CD4-positive, alpha-beta T cell (primary cell): ENCODE measurements at regions of chrX and their contacts with region 1.

Region 1: GRCh38 chrX:81377329-81377728 is 175.4 kb downstream of the SH3BGRL start:
- DNase-seq: peak in 3 of 14 experiments; percentile 5 to 25 (median 12)
- ATAC-seq: no peak
- H3K4me3 ChIP-seq: no peak overlapping the region
- H3K4me3 Mint-ChIP-seq: no peak overlapping the region
- H3K27ac ChIP-seq: no peak overlapping the region
- H3K27ac Mint-ChIP-seq: no peak overlapping the region
- H3K4me1 ChIP-seq: no peaks in the 10 kb centered on the region
- H3K4me1 Mint-ChIP-seq: no peaks in the 10 kb centered on the region
- H3K27me3 ChIP-seq: no peaks in the 10 kb centered on the region
- H3K27me3 Mint-ChIP-seq: peaks cover 16% of the 10 kb centered on the region
- CTCF ChIP-seq: peak; percentile 45

Region 2: DNA sequence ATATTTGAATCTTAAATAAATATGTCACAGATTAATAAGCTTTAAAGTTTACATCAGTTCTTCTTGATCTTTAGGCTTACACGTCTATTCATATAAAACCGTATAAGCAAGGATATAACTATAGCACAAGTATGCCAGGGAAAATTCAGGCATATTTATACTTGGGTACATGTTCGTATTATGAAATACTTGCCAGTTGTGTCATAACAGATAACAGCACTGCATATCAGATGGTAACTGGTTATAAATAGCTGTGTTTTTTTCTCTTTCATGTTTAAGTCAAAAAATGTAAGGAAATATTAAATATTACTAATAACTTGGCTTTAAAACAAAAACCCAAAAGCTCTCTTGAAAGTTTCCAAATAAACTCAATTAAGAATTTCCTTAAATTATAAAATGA is 585.1 kb before region 1 on chrX:
- CTCF ChIA-PET with region 1: no interaction called
- POLR2A ChIA-PET with region 1: no interaction called
- intact Hi-C with region 1: no loop called
- DNase-seq: no peak
- ATAC-seq: no peak
- H3K4me3 ChIP-seq: no peak overlapping the region
- H3K4me3 Mint-ChIP-seq: no peak overlapping the region
- H3K27ac ChIP-seq: no peak overlapping the region
- H3K27ac Mint-ChIP-seq: no peak overlapping the region
- H3K4me1 ChIP-seq: no peaks in the 10 kb centered on the region
- H3K4me1 Mint-ChIP-seq: no peaks in the 10 kb centered on the region
- H3K27me3 ChIP-seq: no peaks in the 10 kb centered on the region
- H3K27me3 Mint-ChIP-seq: no peaks in the 10 kb centered on the region
- CTCF ChIP-seq: no peak

Region 3: GRCh38 chrX:81174286-81174685 is 203.0 kb before region 1 on chrX:
- CTCF ChIA-PET with region 1: interaction called, 3 read pairs
- POLR2A ChIA-PET with region 1: no interaction called
- intact Hi-C with region 1: loop called (anchors 2 to 5 kb)
- DNase-seq: peak in 3 of 14 experiments; percentile 15 to 19 (median 16)
- ATAC-seq: no peak
- H3K4me3 ChIP-seq: no peak overlapping the region
- H3K4me3 Mint-ChIP-seq: no peak overlapping the region
- H3K27ac ChIP-seq: no peak overlapping the region
- H3K27ac Mint-ChIP-seq: no peak overlapping the region
- H3K4me1 ChIP-seq: no peaks in the 10 kb centered on the region
- H3K4me1 Mint-ChIP-seq: no peaks in the 10 kb centered on the region
- H3K27me3 ChIP-seq: no peaks in the 10 kb centered on the region
- H3K27me3 Mint-ChIP-seq: no peaks in the 10 kb centered on the region
- CTCF ChIP-seq: no peak

Region 4: DNA sequence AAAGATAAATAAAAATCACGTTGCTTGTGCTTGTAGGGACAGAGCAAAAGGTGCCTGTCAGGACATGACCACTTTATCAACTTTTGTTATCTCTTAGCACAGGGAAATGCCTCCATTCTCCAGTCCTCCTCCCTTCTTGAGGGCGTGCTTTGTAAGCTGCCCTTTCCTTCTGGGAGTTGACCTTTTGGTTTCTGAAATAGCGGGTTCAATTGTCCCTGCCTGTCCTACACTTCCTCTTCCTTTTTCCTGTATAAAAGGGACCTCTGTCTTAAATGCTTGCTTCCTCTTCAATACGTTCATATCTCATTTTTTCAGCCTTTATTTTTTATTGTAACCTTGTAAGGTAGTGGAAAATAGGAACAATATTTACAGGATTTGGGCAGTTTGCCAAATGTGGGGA is 21.9 kb before region 1 on chrX:
- CTCF ChIA-PET with region 1: no interaction called
- POLR2A ChIA-PET with region 1: no interaction called
- intact Hi-C with region 1: no loop called
- DNase-seq: no peak
- ATAC-seq: no peak
- H3K4me3 ChIP-seq: no peak overlapping the region
- H3K4me3 Mint-ChIP-seq: no peak overlapping the region
- H3K27ac ChIP-seq: no peak overlapping the region
- H3K27ac Mint-ChIP-seq: no peak overlapping the region
- H3K4me1 ChIP-seq: no peaks in the 10 kb centered on the region
- H3K4me1 Mint-ChIP-seq: no peaks in the 10 kb centered on the region
- H3K27me3 ChIP-seq: no peaks in the 10 kb centered on the region
- H3K27me3 Mint-ChIP-seq: no peaks in the 10 kb centered on the region
- CTCF ChIP-seq: no peak

Region 5: GRCh38 chrX:81392396-81392795 is 15.1 kb after region 1 on chrX:
- CTCF ChIA-PET with region 1: no interaction called
- POLR2A ChIA-PET with region 1: no interaction called
- intact Hi-C with region 1: no loop called
- DNase-seq: peak in 2 of 14 experiments; percentile 0 to 3
- ATAC-seq: no peak
- H3K4me3 ChIP-seq: no peak overlapping the region
- H3K4me3 Mint-ChIP-seq: no peak overlapping the region
- H3K27ac ChIP-seq: no peak overlapping the region
- H3K27ac Mint-ChIP-seq: no peak overlapping the region
- H3K4me1 ChIP-seq: no peaks in the 10 kb centered on the region
- H3K4me1 Mint-ChIP-seq: no peaks in the 10 kb centered on the region
- H3K27me3 ChIP-seq: no peaks in the 10 kb centered on the region
- H3K27me3 Mint-ChIP-seq: no peaks in the 10 kb centered on the region
- CTCF ChIP-seq: no peak

Region 6: GRCh38 chrX:81857192-81857591 is 479.9 kb after region 1 on chrX:
- CTCF ChIA-PET with region 1: no interaction called
- POLR2A ChIA-PET with region 1: no interaction called
- intact Hi-C with region 1: no loop called
- DNase-seq: no peak
- ATAC-seq: no peak
- H3K4me3 ChIP-seq: no peak overlapping the region
- H3K4me3 Mint-ChIP-seq: no peak overlapping the region
- H3K27ac ChIP-seq: no peak overlapping the region
- H3K27ac Mint-ChIP-seq: no peak overlapping the region
- H3K4me1 ChIP-seq: no peaks in the 10 kb centered on the region
- H3K4me1 Mint-ChIP-seq: no peaks in the 10 kb centered on the region
- H3K27me3 ChIP-seq: no peaks in the 10 kb centered on the region
- H3K27me3 Mint-ChIP-seq: no peaks in the 10 kb centered on the region
- CTCF ChIP-seq: no peak